ENCODE measurements at regions of chr17 and their contacts with region 1.

Region 1: DNA sequence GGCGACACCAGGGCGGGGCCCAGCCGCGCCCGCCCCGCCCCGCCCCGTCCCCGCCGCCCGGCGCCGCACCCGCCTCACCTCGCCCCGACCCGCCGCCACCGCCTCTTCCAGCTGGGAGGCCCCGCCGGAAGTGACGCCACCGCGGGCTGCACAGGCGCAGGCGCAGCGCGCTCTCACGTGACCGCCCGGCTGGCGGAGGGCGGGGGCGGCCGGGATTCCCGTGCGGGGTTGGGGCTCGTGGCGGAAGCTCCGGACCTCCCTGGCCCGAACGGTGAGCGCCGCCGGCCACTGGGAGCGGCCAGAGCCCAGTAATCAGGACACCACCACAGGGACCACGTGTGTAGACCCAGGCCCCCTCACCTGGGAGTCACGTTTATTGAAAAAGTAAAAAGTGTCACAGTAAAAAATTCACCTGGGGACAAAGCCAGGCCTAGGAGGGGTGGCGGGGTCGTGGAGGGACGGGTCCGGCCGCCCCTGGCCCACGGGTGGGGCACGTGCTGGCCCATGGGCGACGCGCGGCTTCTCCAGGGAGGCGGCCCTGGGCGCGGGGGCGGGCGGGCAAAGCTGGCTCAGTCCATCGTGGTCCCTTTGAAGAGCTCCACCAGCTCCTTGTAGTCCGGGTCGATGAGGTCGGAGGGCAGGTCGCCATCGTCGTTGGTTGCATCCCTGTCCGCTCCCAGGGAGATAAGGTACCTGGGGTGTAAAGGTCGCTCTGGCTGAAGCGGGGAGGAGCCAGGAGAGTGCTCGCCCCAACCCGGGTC is at the start of gene MCRIP1:
- DNase-seq: peak; percentile 99

Region 2: GRCh38 chr17:81682565-81683207 is 150.7 kb before region 1 on chr17:
- CTCF ChIA-PET with region 1: no interaction called
- POLR2A ChIA-PET with region 1: no interaction called
- DNase-seq: no peak

Region 3: DNA sequence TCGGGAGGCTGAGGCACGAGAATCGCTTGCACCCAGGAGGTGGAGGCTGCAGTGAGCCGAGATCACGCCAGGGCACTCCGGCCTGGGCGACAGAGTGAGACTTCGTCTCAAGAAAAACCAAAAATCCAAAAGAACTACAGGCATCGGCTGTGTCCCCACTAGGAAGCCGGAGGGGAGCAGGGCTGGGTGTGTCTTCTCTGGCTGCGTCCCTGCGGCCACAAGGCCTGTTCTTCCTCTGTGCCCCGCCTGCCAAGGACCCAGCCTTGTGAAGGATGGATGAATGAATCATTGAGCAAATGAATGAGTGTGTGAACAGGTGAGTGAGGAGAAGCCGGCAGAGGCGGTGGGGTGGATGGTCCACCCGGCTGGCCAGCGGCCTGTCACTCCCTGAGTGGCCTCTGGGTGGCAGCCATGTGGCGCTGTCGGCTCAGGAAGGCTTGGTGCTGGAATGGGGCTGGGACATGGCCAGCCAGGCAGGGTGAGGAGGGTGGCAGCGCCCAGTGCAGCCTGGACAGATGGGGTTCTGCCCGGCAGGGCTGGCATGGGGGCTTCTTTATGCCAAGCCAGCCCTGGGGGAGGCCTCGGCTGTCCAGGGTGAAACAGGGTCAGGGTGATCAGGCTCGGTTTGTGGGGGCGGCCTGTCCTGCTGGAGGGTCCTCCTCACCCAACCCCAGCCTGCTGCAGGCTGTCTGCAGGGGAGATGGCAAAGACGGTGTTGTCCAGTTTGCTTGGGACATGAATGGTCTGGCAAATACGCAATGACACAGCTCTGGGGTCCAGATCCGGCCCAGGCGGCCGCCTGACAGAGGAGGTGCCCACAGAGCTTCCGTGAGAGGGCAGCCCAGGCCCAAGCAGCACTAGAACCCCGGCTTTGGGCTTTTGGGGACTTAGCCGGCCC is 99.6 kb before region 1 on chr17:
- CTCF ChIA-PET with region 1: no interaction called
- POLR2A ChIA-PET with region 1: interaction called, 10 read pairs
- DNase-seq: peak; percentile 95

Region 4: GRCh38 chr17:81808778-81809555 is 24.4 kb before region 1 on chr17:
- CTCF ChIA-PET with region 1: interaction called, 7 read pairs
- POLR2A ChIA-PET with region 1: interaction called, 18 read pairs
- DNase-seq: no peak

Region 5: GRCh38 chr17:81821603-81822311 is 11.6 kb before region 1 on chr17:
- CTCF ChIA-PET with region 1: no interaction called
- POLR2A ChIA-PET with region 1: interaction called, 16 read pairs
- DNase-seq: peak; percentile 82

Region 6: GRCh38 chr17:81860756-81861518 is 27.6 kb after region 1 on chr17:
- CTCF ChIA-PET with region 1: no interaction called
- POLR2A ChIA-PET with region 1: interaction called, 11 read pairs
- DNase-seq: peak; percentile 98

Region 7: GRCh38 chr17:81902023-81902652 is 68.8 kb after region 1 on chr17 and contains the start of gene NPB:
- CTCF ChIA-PET with region 1: no interaction called
- POLR2A ChIA-PET with region 1: no interaction called
- DNase-seq: no peak

Region 8: DNA sequence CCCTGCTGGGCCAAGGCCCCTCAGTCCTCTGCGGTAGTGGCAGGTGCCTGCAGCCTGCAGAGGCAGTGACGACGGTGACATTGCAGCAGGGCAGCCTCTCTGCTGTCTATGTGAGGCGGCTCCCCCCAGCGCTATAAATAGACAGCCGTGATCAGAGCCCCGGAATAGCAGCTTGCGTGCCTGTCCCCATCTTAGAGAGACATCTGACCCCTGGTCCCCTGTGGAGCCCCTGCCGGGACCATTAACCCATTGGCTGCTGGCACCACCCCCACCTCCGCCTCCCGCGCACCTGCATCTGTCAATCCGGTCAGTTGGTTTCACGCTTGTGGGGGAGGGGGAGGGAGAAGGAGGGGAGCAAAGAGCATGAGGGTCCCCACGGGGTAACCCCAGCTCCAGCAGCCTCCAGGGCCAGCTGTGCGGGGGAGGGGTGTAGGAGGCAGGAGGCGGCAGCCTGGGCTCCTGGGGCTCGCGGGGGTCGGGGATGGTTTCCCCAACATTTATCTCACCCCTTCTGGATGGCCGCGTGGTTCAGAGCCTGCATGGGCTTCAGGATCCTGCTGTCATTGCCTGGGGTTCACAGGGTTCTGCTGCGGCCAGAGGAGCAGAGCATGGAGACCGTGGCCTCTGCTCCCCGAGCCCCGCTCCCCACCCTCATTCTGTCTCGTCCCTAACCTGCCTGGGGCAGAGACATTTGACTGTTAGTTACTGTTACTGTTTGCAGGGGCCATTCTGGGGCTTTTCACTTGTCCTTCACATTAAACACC is 108.6 kb after region 1 on chr17:
- CTCF ChIA-PET with region 1: no interaction called
- POLR2A ChIA-PET with region 1: no interaction called
- DNase-seq: no peak